GM12878 (cell line): ENCODE measurements at regions of chr5 and their contacts with region 1.

Region 1: GRCh38 chr5:38809388-38810359 is 36.1 kb upstream of the OSMR start:
- DNase-seq: no peak
- ATAC-seq: peak; percentile 90
- H3K4me3 ChIP-seq: no peak overlapping the region
- H3K27ac ChIP-seq: no peak overlapping the region
- H3K4me1 ChIP-seq: no peaks in the 10 kb centered on the region
- H3K27me3 ChIP-seq: no peaks in the 10 kb centered on the region; a peak in 1 of 4 replicates
- CTCF ChIP-seq: peak; percentile 68 to 82 (median 71)
- EP300 ChIP-seq: no peak
- POLR2A ChIP-seq: no peak
- RAD21 ChIP-seq: peak; percentile 97

Region 2: GRCh38 chr5:38265546-38266179 is 544.0 kb before region 1 on chr5:
- CTCF ChIA-PET with region 1: interaction called, 19 read pairs
- POLR2A ChIA-PET with region 1: no interaction called
- RAD21 ChIA-PET with region 1: interaction called, 3 read pairs
- SMC1A ChIA-PET with region 1: no interaction called
- in situ Hi-C with region 1: no loop called
- intact Hi-C with region 1: loop called (anchors 10 kb)
- DNase-seq: no peak
- ATAC-seq: peak; percentile 95
- H3K4me3 ChIP-seq: no peak overlapping the region
- H3K27ac ChIP-seq: no peak overlapping the region
- H3K4me1 ChIP-seq: no peaks in the 10 kb centered on the region
- H3K27me3 ChIP-seq: no peaks in the 10 kb centered on the region
- CTCF ChIP-seq: peak; percentile 56 to 77 (median 69)
- EP300 ChIP-seq: no peak
- POLR2A ChIP-seq: no peak
- RAD21 ChIP-seq: peak; percentile 30; the same call in 1 of the 2 replicates

Region 3: DNA sequence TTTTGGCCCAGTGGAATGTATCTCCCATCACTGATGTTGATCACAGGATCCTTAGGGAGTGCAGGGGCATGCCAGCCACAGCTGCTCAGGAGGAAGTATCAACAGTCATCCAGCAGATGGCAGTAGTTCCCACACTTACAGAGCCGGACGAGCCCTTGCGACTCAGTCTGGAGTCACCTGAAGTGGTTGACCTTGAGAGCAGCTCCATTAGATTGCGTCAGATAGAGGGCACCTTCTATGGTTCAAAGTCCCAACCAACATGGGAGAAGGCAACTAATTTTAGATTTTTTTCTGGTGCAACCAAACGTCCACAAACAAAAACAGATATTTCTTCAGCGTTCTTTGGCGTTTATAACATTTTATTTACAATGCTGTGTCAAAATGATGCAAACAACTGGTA is 426.8 kb before region 1 on chr5:
- CTCF ChIA-PET with region 1: interaction called, 30 read pairs
- POLR2A ChIA-PET with region 1: no interaction called
- RAD21 ChIA-PET with region 1: interaction called, 4 read pairs
- SMC1A ChIA-PET with region 1: interaction called, 10 read pairs
- in situ Hi-C with region 1: no loop called
- intact Hi-C with region 1: loop called (anchors 2 kb)
- DNase-seq: peak; percentile 4
- ATAC-seq: peak; percentile 100
- H3K4me3 ChIP-seq: no peak overlapping the region
- H3K27ac ChIP-seq: no peak overlapping the region
- H3K4me1 ChIP-seq: no peaks in the 10 kb centered on the region
- H3K27me3 ChIP-seq: peaks cover 0 to 4% of the 10 kb centered on the region in 2 experiments; a peak in 1 of 4 replicates
- CTCF ChIP-seq: peak; percentile 67 to 83 (median 78)
- EP300 ChIP-seq: no peak
- POLR2A ChIP-seq: no peak
- RAD21 ChIP-seq: peak; percentile 49; the same call in 1 of the 2 replicates

Region 4: DNA sequence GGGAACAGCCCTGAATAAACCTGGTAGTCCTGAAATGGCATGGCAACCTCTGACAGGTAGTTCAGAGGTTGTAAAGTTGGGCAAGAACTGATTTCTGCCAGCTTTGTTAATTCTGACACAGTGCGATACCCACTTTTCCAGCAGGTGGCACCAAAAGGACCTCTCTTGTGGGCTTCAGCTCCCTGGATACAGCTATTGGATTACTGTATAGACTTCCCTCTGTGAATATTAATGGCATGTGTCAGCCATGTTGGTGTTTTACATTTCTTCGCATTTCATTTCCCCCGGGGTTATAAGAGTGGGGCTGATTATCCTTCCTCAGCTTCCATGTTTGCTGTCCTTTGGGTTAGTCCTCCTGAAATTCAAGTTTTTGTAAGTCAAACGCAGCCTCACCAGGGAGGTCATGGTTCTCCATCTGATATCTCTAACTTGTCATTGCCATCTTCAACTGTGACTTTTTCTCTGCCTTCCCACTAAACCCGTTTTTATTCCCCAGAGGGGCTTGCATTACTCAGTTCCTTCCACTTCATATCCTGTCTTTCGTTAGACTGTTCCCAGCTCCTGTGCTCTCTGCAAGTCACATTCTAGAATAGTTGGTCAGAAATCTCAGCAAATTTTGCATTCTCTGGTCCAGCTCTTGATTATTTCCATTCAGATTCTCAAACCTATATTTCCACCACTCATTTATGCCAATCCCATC is 388.8 kb before region 1 on chr5:
- CTCF ChIA-PET with region 1: interaction called, 55 read pairs
- POLR2A ChIA-PET with region 1: interaction called, 9 read pairs
- RAD21 ChIA-PET with region 1: interaction called, 14 read pairs
- SMC1A ChIA-PET with region 1: interaction called, 23 read pairs
- in situ Hi-C with region 1: no loop called
- intact Hi-C with region 1: loop called (anchors 1 kb)
- DNase-seq: no peak
- ATAC-seq: peak; percentile 77
- H3K4me3 ChIP-seq: no peak overlapping the region
- H3K27ac ChIP-seq: no peak overlapping the region
- H3K4me1 ChIP-seq: no peaks in the 10 kb centered on the region
- H3K27me3 ChIP-seq: no peaks in the 10 kb centered on the region
- CTCF ChIP-seq: peak; percentile 59 to 68 (median 60)
- EP300 ChIP-seq: no peak
- POLR2A ChIP-seq: no peak
- RAD21 ChIP-seq: peak; percentile 42

Region 5: GRCh38 chr5:38433160-38433861 is 376.4 kb before region 1 on chr5:
- CTCF ChIA-PET with region 1: interaction called, 4 read pairs
- POLR2A ChIA-PET with region 1: no interaction called
- RAD21 ChIA-PET with region 1: interaction called, 3 read pairs
- SMC1A ChIA-PET with region 1: no interaction called
- in situ Hi-C with region 1: loop called (anchors 5 kb)
- intact Hi-C with region 1: no loop called
- DNase-seq: no peak
- ATAC-seq: no peak
- H3K4me3 ChIP-seq: no peak overlapping the region
- H3K27ac ChIP-seq: no peak overlapping the region
- H3K4me1 ChIP-seq: no peaks in the 10 kb centered on the region
- H3K27me3 ChIP-seq: peaks cover 0 to 4% of the 10 kb centered on the region in 2 experiments; a peak in 1 of 4 replicates
- CTCF ChIP-seq: no peak
- EP300 ChIP-seq: no peak
- POLR2A ChIP-seq: no peak
- RAD21 ChIP-seq: no peak